CD14-positive monocyte (primary cell): ENCODE measurements at regions of chr7 and their contacts with region 1.

Region 1: GRCh38 chr7:77460057-77460486 is 43.9 kb upstream of the GSAP start:
- DNase-seq: no peak
- H3K4me3 ChIP-seq: no peak overlapping the region
- H3K4me3 Mint-ChIP-seq: no peak overlapping the region
- H3K27ac ChIP-seq: no peak overlapping the region
- H3K27ac Mint-ChIP-seq: no peak overlapping the region
- H3K4me1 ChIP-seq: peaks cover 53 to 74% of the 10 kb centered on the region in 2 donors
- H3K4me1 Mint-ChIP-seq: peaks cover 63% of the 10 kb centered on the region
- H3K27me3 ChIP-seq: no peaks in the 10 kb centered on the region
- H3K27me3 Mint-ChIP-seq: peaks cover 0 to 4% (median 0%) of the 10 kb centered on the region in 3 donors
- CTCF ChIP-seq: no peak

Region 2: GRCh38 chr7:77409739-77410547 is 50.1 kb before region 1 on chr7:
- intact Hi-C with region 1: loop called (anchors 5 to 10 kb)
- DNase-seq: peak; percentile 91 to 99 (median 98)
- H3K4me3 ChIP-seq: peak overlapping the region in 1 of 3 experiments; percentile 54
- H3K4me3 Mint-ChIP-seq: peak overlapping the region in 1 of 2 donors; percentile 39
- H3K27ac ChIP-seq: peak overlapping the region; percentile 75 to 99
- H3K27ac Mint-ChIP-seq: peak overlapping the region; percentile 96 to 99 (median 98)
- H3K4me1 ChIP-seq: peaks cover 68 to 79% of the 10 kb centered on the region in 2 donors
- H3K4me1 Mint-ChIP-seq: peaks cover 72% of the 10 kb centered on the region
- H3K27me3 ChIP-seq: no peaks in the 10 kb centered on the region
- H3K27me3 Mint-ChIP-seq: no peaks in the 10 kb centered on the region
- CTCF ChIP-seq: no peak

Region 3: DNA sequence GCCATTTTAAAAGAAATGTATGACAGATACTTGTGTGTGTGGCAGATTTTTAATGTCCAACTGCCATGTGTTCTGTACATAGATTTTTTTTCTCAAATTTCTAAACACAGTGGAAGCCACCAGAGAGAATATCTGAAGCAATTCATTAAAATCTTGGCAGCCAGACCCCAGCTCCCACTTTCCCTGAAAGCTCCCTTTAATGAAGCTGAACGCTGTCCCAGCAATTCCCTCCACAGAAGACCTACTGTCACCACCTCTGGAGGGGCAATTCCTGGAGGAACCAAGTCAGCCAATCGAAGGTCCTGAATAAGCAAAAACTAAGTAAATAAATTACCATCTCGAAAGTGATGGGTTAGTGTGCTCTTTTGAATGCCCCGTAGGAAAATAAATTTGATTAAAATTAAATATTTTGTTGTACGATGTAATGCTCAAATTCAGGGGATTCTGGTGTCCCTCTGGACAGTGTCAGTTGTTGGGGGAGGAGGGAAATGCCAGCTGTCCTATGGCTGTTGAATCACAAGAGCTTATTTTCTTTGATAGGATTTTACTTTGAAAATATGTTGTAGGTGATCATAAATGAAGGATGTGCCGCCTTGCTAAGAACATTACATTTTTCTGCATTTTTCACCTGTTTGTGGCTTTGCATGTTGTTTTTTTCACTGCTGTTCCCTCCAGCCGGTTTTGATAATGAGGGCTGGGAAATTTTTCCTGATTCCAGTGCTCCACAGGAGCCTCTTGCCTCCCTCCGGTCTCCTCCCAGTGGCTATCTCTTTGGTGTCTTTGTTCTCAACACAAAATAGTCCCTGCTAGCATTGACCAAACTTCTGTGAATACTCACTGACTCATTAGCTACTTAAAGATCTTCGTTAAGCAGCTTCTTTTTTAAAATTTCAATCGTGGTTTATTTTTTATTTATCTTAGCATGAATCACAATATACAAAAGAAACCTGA is 34.7 kb before region 1 on chr7:
- intact Hi-C with region 1: loop called (anchors 5 kb)
- DNase-seq: no peak
- H3K4me3 ChIP-seq: no peak overlapping the region
- H3K4me3 Mint-ChIP-seq: no peak overlapping the region
- H3K27ac ChIP-seq: no peak overlapping the region
- H3K27ac Mint-ChIP-seq: peak overlapping the region in 5 of 7 donors; percentile 4 to 76 (median 40)
- H3K4me1 ChIP-seq: peaks cover 54 to 62% of the 10 kb centered on the region in 2 donors
- H3K4me1 Mint-ChIP-seq: peaks cover 67% of the 10 kb centered on the region
- H3K27me3 ChIP-seq: no peaks in the 10 kb centered on the region
- H3K27me3 Mint-ChIP-seq: no peaks in the 10 kb centered on the region
- CTCF ChIP-seq: no peak